ENCODE measurements at regions of chr4 and their contacts with region 1.

Region 1: GRCh38 chr4:2418650-2419571 is at the start of gene CFAP99:
- DNase-seq: peak; percentile 99
- ATAC-seq: peak; percentile 92
- H3K4me3 ChIP-seq: peak within 1 kb of the TSS; percentile 2 to 72 (median 51)
- H3K4me3 Mint-ChIP-seq: peak within 1 kb of the TSS; percentile 89
- H3K27ac ChIP-seq: peak within 1 kb of the TSS; percentile 29 to 76
- H3K27ac Mint-ChIP-seq: peak within 1 kb of the TSS; percentile 89
- H3K4me1 ChIP-seq: peaks cover 34 to 38% of the 10 kb centered on the region in 2 donors
- H3K4me1 Mint-ChIP-seq: peaks cover 44% of the 10 kb centered on the region
- H3K27me3 ChIP-seq: peaks cover 0 to 64% (median 33%) of the 10 kb centered on the region in 4 experiments
- H3K27me3 Mint-ChIP-seq: peaks cover 40% of the 10 kb centered on the region
- CTCF ChIP-seq: peak; percentile 41
- total RNA-seq, gene CFAP99: not detected in 2 replicates

Region 2: DNA sequence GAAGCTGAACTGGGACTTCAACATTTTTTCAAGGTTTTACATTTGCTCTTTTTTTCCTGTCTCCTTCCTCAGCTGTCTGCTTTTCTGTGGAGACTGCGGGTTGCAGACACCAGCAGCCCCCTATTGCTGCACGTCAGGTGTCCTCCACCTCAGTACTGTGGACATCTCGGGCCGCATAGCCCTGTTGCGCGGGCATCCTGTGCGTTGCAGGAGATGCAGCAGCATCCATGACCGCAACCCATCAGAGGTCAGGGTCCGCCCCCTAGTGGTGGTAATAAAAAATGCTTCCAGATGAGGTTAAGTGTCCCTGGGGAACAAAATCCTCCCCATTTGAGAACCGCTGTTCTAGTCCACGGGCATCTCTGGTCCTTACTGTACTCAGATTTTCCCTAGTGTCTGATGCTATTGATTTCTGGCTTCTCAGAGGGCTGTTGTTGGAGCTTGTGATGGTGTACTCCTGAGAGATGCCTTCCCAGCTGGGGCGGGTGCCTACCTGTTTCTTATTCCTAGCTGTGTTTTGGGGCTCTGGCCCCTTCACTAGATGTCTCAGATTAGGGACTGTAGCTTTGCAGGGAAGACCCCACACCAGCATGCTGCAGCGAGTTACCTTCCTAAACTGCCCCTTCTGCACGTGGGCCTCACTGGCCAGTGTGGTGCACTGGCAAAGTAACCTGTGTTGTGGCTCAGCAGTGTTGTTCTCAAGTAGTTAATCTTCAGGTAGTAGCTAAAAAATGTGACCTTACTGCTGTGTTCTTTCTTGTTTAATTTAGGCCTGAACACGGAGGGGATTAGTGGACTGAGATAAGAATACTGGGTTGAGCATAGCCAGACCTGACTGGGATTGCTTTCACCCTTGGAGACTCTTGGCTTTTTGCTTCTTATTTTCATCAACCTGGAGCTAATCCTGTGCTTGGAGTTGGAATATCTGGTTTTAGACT is 519.5 kb before region 1 on chr4:
- CTCF ChIA-PET with region 1: no interaction called
- POLR2A ChIA-PET with region 1: no interaction called
- intact Hi-C with region 1: no loop called
- DNase-seq: peak; percentile 87
- ATAC-seq: peak; percentile 98
- H3K4me3 ChIP-seq: no peak overlapping the region
- H3K4me3 Mint-ChIP-seq: no peak overlapping the region
- H3K27ac ChIP-seq: no peak overlapping the region
- H3K27ac Mint-ChIP-seq: no peak overlapping the region
- H3K4me1 ChIP-seq: peaks cover 5 to 9% of the 10 kb centered on the region in 2 donors
- H3K4me1 Mint-ChIP-seq: peaks cover 9% of the 10 kb centered on the region
- H3K27me3 ChIP-seq: no peaks in the 10 kb centered on the region
- H3K27me3 Mint-ChIP-seq: no peaks in the 10 kb centered on the region
- CTCF ChIP-seq: peak; percentile 92

Region 3: DNA sequence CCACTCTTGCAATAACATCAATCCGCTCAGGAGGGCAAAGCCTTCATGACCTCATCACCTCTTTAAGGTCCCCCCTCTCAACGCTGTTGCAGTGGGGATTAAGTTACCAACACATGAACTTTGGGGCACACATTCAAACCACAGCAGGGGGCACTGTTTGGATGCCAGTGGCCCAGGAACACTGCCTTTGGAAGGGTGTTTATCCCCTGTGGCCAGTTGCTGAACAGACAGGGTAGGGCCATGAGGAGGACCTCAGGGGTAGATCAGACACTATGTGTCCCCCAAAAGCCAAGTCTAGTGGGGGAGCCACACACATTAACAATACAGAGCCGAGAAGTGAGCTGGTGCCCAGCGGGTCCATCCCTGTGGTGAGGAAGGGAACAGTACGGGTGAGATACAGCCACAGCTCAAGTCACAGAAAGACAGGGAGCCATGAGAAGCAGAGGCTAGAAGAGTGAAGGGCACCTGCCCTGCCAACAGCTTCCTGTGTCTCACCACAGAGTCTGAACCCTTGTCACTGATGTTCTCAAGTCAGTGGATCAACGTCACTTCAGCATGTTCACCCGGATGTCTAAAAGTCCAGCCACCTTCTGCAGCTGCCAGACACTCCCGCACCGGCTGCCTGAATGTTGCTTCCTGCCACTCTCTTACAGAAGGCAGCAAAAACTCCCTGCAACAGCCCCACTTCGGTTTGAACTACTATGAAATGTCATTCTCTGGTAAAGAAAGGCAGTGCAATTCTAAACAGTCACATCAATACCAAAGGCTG is 137.2 kb before region 1 on chr4:
- CTCF ChIA-PET with region 1: interaction called, 3 read pairs
- POLR2A ChIA-PET with region 1: interaction called, 4 read pairs
- intact Hi-C with region 1: loop called (anchors 1 kb)
- DNase-seq: peak; percentile 90
- ATAC-seq: peak; percentile 92
- H3K4me3 ChIP-seq: no peak overlapping the region
- H3K4me3 Mint-ChIP-seq: peak overlapping the region; percentile 87
- H3K27ac ChIP-seq: peak overlapping the region; percentile 54 to 83
- H3K27ac Mint-ChIP-seq: peak overlapping the region; percentile 99
- H3K4me1 ChIP-seq: peaks cover 18 to 21% of the 10 kb centered on the region in 2 donors
- H3K4me1 Mint-ChIP-seq: peaks cover 33% of the 10 kb centered on the region
- H3K27me3 ChIP-seq: no peaks in the 10 kb centered on the region
- H3K27me3 Mint-ChIP-seq: no peaks in the 10 kb centered on the region
- CTCF ChIP-seq: peak; percentile 76

Region 4: GRCh38 chr4:2330091-2331042 is 88.5 kb before region 1 on chr4:
- CTCF ChIA-PET with region 1: no interaction called
- POLR2A ChIA-PET with region 1: no interaction called
- intact Hi-C with region 1: no loop called
- DNase-seq: no peak
- ATAC-seq: no peak
- H3K4me3 ChIP-seq: no peak overlapping the region
- H3K4me3 Mint-ChIP-seq: no peak overlapping the region
- H3K27ac ChIP-seq: no peak overlapping the region
- H3K27ac Mint-ChIP-seq: no peak overlapping the region
- H3K4me1 ChIP-seq: peaks cover 12 to 14% of the 10 kb centered on the region in 2 donors
- H3K4me1 Mint-ChIP-seq: peaks cover 15% of the 10 kb centered on the region
- H3K27me3 ChIP-seq: peaks cover 0 to 6% (median 0%) of the 10 kb centered on the region in 4 experiments
- H3K27me3 Mint-ChIP-seq: peaks cover 5% of the 10 kb centered on the region
- CTCF ChIP-seq: no peak

Region 5: DNA sequence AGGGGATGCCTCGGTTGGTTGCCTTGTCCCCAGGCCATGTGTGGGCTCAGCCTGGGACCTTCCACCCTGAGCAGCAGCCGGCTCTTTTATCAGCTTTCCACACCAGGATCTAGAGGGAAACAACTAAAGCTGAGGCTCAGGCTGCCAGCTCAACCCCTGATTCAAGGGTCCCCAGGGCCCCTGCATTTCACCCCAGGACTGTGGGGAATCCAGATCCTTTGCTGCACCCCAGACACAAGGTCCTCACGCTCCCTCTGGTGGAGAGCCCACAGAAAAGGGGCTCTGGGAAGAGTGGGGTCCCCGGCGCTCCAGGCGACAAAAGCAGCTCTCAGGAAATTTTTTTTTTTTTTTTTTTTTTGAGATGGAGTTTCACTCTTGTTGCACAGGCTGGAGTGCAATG is 64.8 kb before region 1 on chr4:
- CTCF ChIA-PET with region 1: no interaction called
- POLR2A ChIA-PET with region 1: no interaction called
- intact Hi-C with region 1: loop called (anchors 2 kb)
- DNase-seq: peak; percentile 32
- ATAC-seq: peak; percentile 37
- H3K4me3 ChIP-seq: no peak overlapping the region
- H3K4me3 Mint-ChIP-seq: no peak overlapping the region
- H3K27ac ChIP-seq: no peak overlapping the region
- H3K27ac Mint-ChIP-seq: peak overlapping the region; percentile 32
- H3K4me1 ChIP-seq: peaks cover 11 to 13% of the 10 kb centered on the region in 2 donors
- H3K4me1 Mint-ChIP-seq: peaks cover 15% of the 10 kb centered on the region
- H3K27me3 ChIP-seq: no peaks in the 10 kb centered on the region
- H3K27me3 Mint-ChIP-seq: no peaks in the 10 kb centered on the region
- CTCF ChIP-seq: peak; percentile 42

Region 6: DNA sequence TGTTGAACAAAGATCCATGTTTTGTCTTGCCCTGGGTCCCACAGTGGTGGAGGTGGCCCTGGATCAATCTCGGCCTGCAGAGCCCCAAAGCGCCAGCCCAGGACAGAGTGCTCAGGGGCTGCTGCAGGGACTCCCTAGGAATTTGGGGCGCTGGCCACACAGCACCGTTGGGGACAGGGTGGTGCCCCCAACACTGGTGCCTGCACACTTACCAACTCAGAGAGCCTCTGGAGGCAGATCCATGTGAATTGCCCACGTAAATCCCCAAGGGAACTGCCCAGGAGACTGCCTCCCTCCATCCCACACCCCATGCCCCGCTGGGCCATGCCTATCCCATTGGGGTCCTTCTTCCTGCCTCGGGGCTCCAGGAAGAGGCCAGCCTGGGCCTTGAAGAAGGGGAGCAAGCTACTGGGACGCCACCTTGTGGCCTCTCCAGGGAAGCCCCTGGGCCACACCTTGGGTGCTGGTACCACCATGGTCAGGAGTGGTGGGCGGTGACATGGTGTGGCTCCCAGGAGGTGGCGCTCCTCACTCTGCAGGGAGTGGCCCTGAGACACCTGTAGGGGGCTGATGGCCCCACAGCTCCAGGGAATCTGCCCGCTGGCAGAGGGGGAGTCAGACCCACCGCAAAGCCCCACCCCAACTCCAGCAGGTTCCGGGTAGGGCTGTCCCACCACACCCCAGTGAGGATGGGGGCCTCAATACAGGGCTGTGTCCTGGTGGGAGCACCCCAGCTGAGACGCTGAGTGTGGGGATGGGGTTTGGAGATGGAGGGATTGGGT is 22.7 kb after region 1 on chr4:
- CTCF ChIA-PET with region 1: no interaction called
- POLR2A ChIA-PET with region 1: no interaction called
- intact Hi-C with region 1: loop called (anchors 1 kb)
- DNase-seq: peak; percentile 78
- ATAC-seq: peak; percentile 98
- H3K4me3 ChIP-seq: no peak overlapping the region
- H3K4me3 Mint-ChIP-seq: no peak overlapping the region
- H3K27ac ChIP-seq: no peak overlapping the region
- H3K27ac Mint-ChIP-seq: no peak overlapping the region
- H3K4me1 ChIP-seq: peaks cover 0 to 7% of the 10 kb centered on the region in 2 donors
- H3K4me1 Mint-ChIP-seq: peaks cover 5% of the 10 kb centered on the region
- H3K27me3 ChIP-seq: no peaks in the 10 kb centered on the region
- H3K27me3 Mint-ChIP-seq: no peaks in the 10 kb centered on the region
- CTCF ChIP-seq: peak; percentile 87

Region 7: GRCh38 chr4:2570551-2571222 is 151.8 kb after region 1 on chr4:
- CTCF ChIA-PET with region 1: no interaction called
- POLR2A ChIA-PET with region 1: no interaction called
- intact Hi-C with region 1: no loop called
- DNase-seq: peak; percentile 56
- ATAC-seq: peak; percentile 81
- H3K4me3 ChIP-seq: peak overlapping the region in 1 of 5 experiments; percentile 21
- H3K4me3 Mint-ChIP-seq: peak overlapping the region; percentile 58
- H3K27ac ChIP-seq: peak overlapping the region; percentile 15 to 58
- H3K27ac Mint-ChIP-seq: peak overlapping the region; percentile 17
- H3K4me1 ChIP-seq: peaks cover 23 to 35% of the 10 kb centered on the region in 2 donors
- H3K4me1 Mint-ChIP-seq: peaks cover 52% of the 10 kb centered on the region
- H3K27me3 ChIP-seq: no peaks in the 10 kb centered on the region
- H3K27me3 Mint-ChIP-seq: no peaks in the 10 kb centered on the region
- CTCF ChIP-seq: no peak

Region 8: GRCh38 chr4:3233391-3234071 is 814.6 kb after region 1 on chr4:
- CTCF ChIA-PET with region 1: no interaction called
- POLR2A ChIA-PET with region 1: no interaction called
- intact Hi-C with region 1: no loop called
- DNase-seq: no peak
- ATAC-seq: no peak
- H3K4me3 ChIP-seq: no peak overlapping the region
- H3K4me3 Mint-ChIP-seq: no peak overlapping the region
- H3K27ac ChIP-seq: no peak overlapping the region
- H3K27ac Mint-ChIP-seq: no peak overlapping the region
- H3K4me1 ChIP-seq: no peaks in the 10 kb centered on the region
- H3K4me1 Mint-ChIP-seq: no peaks in the 10 kb centered on the region
- H3K27me3 ChIP-seq: no peaks in the 10 kb centered on the region
- H3K27me3 Mint-ChIP-seq: no peaks in the 10 kb centered on the region
- CTCF ChIP-seq: no peak

Measured in B cell (primary cell).